Gastrocnemius medialis (tissue), 4 donors: ENCODE measurements at regions of chr6 and their contacts with region 1.

Region 1: GRCh38 chr6:35624341-35625070 is 64.2 kb downstream of the FKBP5 start:
- DNase-seq: no peak
- ATAC-seq: no peak
- H3K4me3 ChIP-seq: no peak overlapping the region
- H3K27ac ChIP-seq: peak overlapping the region; percentile 51 to 99 (median 55)
- H3K4me1 ChIP-seq: peaks cover 17 to 28% of the 10 kb centered on the region in 2 donors
- H3K27me3 ChIP-seq: no peaks in the 10 kb centered on the region
- CTCF ChIP-seq: peak in 1 of 5 experiments; percentile 15
- POLR2A ChIP-seq: no peak

Region 2: DNA sequence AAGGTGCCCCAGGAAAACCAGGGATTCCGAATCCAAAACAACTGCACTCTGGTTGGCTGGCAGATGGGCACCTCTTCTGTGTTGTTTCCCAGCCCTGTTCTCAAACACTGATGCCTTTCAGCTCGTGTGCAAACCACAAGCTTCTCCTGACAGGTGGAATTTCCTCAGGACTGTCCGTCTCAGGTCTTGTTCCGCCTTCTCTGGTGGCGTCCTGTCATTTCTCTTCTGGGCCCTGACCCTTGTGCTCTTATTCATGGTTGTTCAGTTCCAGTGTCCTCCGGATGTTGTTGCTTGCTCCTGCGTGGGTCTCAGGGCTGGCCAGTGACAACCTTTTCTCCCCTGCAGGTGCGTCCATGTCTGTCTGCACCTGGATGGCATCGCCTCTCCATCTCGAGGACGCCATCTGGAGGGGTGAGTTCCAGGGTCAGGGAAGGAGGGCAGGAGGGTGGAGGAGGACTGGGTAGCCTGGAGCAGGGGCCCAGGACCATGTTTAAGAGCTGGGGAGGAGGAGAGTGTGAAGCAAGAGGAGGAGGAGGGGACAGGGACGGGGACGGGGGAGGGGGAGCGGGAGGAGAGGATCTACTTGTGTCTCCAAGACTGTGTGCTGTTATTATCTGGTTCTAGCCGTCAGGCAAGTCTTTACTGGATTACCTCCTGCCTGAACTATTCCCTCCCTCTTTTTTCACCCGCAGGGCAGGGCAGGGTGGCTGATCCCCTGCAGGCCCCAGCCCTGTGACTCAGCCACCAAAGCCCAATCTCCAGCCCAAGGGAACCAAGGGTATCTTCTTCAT is 79.8 kb before region 1 on chr6:
- in situ Hi-C with region 1: no loop called
- intact Hi-C with region 1: no loop called
- DNase-seq: no peak
- ATAC-seq: peak in 1 of 2 donors; percentile 16
- H3K4me3 ChIP-seq: no peak overlapping the region
- H3K27ac ChIP-seq: no peak overlapping the region
- H3K4me1 ChIP-seq: no peaks in the 10 kb centered on the region
- H3K27me3 ChIP-seq: no peaks in the 10 kb centered on the region
- CTCF ChIP-seq: no peak
- POLR2A ChIP-seq: no peak

Region 3: GRCh38 chr6:35569011-35569461 is 55.5 kb before region 1 on chr6:
- in situ Hi-C with region 1: loop called in 1 of 4 experiments (anchors 10 kb)
- intact Hi-C with region 1: no loop called
- DNase-seq: peak; percentile 70 to 87
- ATAC-seq: peak; percentile 14 to 24
- H3K4me3 ChIP-seq: no peak overlapping the region
- H3K27ac ChIP-seq: peak overlapping the region; percentile 42 to 76 (median 66)
- H3K4me1 ChIP-seq: no peaks in the 10 kb centered on the region
- H3K27me3 ChIP-seq: no peaks in the 10 kb centered on the region
- CTCF ChIP-seq: peak; percentile 53 to 67 (median 66)
- POLR2A ChIP-seq: peak in 1 of 2 donors; percentile 18

Region 4: DNA sequence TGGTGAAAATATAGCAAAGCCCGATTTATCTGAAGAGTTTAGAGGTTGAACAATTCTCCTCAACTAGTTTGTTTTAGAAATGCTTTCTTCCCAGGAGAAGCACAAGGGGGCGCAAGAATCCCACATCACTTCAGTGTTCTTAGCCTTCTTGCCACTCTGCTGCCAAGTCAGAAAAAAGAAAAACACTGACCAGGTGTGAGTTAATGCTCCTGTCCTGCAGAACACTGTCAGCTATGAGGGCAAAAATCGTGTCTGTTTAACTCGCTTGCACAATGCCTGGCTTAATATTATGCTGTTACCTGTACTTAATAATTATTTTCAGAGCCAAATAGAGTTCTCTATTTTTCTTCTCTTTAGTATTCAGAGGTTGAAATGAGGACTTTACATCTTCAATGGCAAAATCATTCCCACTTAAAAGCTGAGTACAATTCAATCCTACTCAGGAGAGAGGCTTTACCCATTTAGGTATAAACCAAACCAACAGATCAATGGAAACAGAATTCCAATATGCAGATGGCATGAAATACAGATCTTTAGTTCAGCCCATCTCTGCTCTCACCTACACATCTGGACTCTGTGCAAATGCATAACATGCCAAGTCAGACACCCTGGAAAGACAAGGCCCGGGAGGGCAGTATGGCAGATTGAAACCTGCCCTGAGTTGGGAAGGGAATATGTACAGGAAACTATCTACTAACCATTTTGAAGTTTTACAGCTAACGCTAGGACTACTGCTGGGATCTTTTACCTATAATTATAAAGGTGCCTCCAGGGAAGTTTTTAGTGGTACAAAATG is 40.4 kb before region 1 on chr6:
- in situ Hi-C with region 1: loop called in 1 of 4 experiments (anchors 10 kb)
- intact Hi-C with region 1: loop called (anchors 5 kb)
- DNase-seq: peak in 1 of 2 donors; percentile 60
- ATAC-seq: peak; percentile 24 to 37
- H3K4me3 ChIP-seq: no peak overlapping the region
- H3K27ac ChIP-seq: peak overlapping the region; percentile 89 to 99 (median 92)
- H3K4me1 ChIP-seq: peaks cover 52 to 71% of the 10 kb centered on the region in 2 donors
- H3K27me3 ChIP-seq: no peaks in the 10 kb centered on the region
- CTCF ChIP-seq: peak; percentile 56 to 78 (median 70)
- POLR2A ChIP-seq: no peak

Region 5: DNA sequence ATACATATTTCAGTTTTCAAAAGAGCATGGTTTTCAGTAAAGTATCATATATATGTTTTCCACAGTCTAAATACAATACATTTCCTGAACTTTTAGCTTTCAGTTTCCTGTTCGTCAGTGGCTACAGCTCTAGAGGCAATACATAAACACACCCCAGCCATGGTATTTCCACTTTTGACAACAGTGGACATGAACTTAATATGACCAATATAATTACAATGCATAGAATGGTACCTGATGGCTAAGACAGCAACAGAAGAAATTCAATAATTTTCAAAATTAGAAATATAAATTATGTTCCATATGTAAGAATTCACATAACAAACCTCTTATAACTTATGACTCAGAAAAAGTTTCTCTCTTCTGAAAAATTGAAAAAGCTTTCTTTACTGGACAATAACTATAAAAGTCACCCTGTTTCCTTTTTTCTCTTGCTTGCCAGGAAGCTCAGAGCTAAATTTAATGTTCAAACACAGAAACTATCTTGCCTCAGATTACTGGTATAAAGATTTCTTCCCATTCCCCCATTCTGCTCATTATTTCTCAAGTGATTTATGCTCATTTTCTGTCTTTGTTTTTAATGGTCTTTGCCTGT is 45.0 kb after region 1 on chr6:
- in situ Hi-C with region 1: loop called in 1 of 4 experiments (anchors 10 kb)
- intact Hi-C with region 1: no loop called
- DNase-seq: no peak
- ATAC-seq: no peak
- H3K4me3 ChIP-seq: peak overlapping the region in 2 of 4 donors; percentile 23 to 35
- H3K27ac ChIP-seq: peak overlapping the region; percentile 4 to 58 (median 35)
- H3K4me1 ChIP-seq: peaks cover 77 to 94% of the 10 kb centered on the region in 2 donors
- H3K27me3 ChIP-seq: no peaks in the 10 kb centered on the region
- CTCF ChIP-seq: no peak
- POLR2A ChIP-seq: no peak

Region 6: DNA sequence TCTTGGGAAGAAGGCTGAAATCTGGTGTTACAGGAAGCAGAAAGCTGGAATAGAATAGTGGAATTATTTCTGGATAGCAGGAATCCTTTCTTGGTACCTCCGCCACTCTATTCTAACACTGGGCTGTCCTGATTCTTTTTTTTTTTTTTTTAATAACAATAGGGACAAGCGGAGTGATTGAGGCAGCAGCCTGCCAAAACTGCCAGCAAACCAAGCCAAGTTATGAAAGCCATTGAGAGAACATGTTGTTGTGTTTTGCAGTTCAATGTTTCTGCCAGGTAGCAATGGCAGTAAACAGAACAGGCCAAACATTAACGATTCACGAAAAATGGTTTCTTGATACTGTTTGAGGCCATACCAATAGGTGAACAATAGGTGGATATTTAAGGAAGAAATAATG is 352.8 kb after region 1 on chr6:
- in situ Hi-C with region 1: no loop called
- intact Hi-C with region 1: no loop called
- DNase-seq: no peak
- ATAC-seq: peak in 1 of 2 donors; percentile 58
- H3K4me3 ChIP-seq: no peak overlapping the region
- H3K27ac ChIP-seq: no peak overlapping the region
- H3K4me1 ChIP-seq: peaks cover 0 to 4% of the 10 kb centered on the region in 2 donors
- H3K27me3 ChIP-seq: no peaks in the 10 kb centered on the region
- CTCF ChIP-seq: no peak
- POLR2A ChIP-seq: no peak